Prostate gland (tissue), 2 donors: ENCODE measurements at regions of chr2 and their contacts with region 1.

Region 1: GRCh38 chr2:31765078-31765945 is 184.6 kb upstream of the SRD5A2 start:
- DNase-seq: no peak
- H3K4me3 ChIP-seq: no peak overlapping the region
- H3K27ac ChIP-seq: peak overlapping the region; percentile 65 to 77
- H3K4me1 ChIP-seq: no peaks in the 10 kb centered on the region
- H3K27me3 ChIP-seq: no peaks in the 10 kb centered on the region
- CTCF ChIP-seq: no peak
- POLR2A ChIP-seq: no peak

Region 2: GRCh38 chr2:31534636-31535035 is 230.7 kb before region 1 on chr2:
- intact Hi-C with region 1: no loop called
- DNase-seq: no peak
- H3K4me3 ChIP-seq: no peak overlapping the region
- H3K27ac ChIP-seq: no peak overlapping the region
- H3K4me1 ChIP-seq: no peaks in the 10 kb centered on the region
- H3K27me3 ChIP-seq: no peaks in the 10 kb centered on the region
- CTCF ChIP-seq: no peak
- POLR2A ChIP-seq: no peak

Region 3: GRCh38 chr2:31812051-31812798 is 46.9 kb after region 1 on chr2:
- intact Hi-C with region 1: loop called (anchors 5 kb)
- DNase-seq: peak; percentile 27
- H3K4me3 ChIP-seq: no peak overlapping the region
- H3K27ac ChIP-seq: peak overlapping the region; percentile 49 to 67
- H3K4me1 ChIP-seq: no peaks in the 10 kb centered on the region
- H3K27me3 ChIP-seq: no peaks in the 10 kb centered on the region
- CTCF ChIP-seq: no peak
- POLR2A ChIP-seq: no peak